Mucosa of descending colon (tissue), 3 donors: ENCODE measurements at regions of chrX and their contacts with region 1.

Region 1: GRCh38 chrX:153763989-153764755 is at the start of gene PLXNB3:
- DNase-seq: peak; percentile 82 to 86 (median 85)
- ATAC-seq: peak; percentile 93
- H3K4me3 ChIP-seq: no peak within 1 kb of the TSS
- H3K4me1 ChIP-seq: no peaks in the 10 kb centered on the region
- CTCF ChIP-seq: peak; percentile 52
- total RNA-seq, gene PLXNB3: 3.0 to 44.9 (median 3.3) TPM

Region 2: GRCh38 chrX:153953342-153953830 is 189.2 kb after region 1 on chrX:
- intact Hi-C with region 1: loop called in 1 of 2 experiments (anchors 10 kb)
- DNase-seq: peak; percentile 75 to 81 (median 78)
- ATAC-seq: peak; percentile 88
- H3K4me3 ChIP-seq: no peak overlapping the region
- H3K4me1 ChIP-seq: no peaks in the 10 kb centered on the region
- CTCF ChIP-seq: peak; percentile 90